H1 (cell line): ENCODE measurements at regions of chr18 and their contacts with region 1.

Region 1: GRCh38 chr18:76259096-76259495 is 235.9 kb downstream of the ZNF516 start:
- DNase-seq: peak in 1 of 2 experiments; percentile 58
- H3K4me3 ChIP-seq: no peak overlapping the region
- H3K27ac ChIP-seq: no peak overlapping the region
- H3K4me1 ChIP-seq: peaks cover 0 to 24% (median 16%) of the 10 kb centered on the region in 4 experiments; a peak in 6 of 7 replicates
- H3K27me3 ChIP-seq: no peaks in the 10 kb centered on the region
- CTCF ChIP-seq: peak in 2 of 3 experiments; percentile 47 to 67; a peak in 3 of 4 replicates
- EP300 ChIP-seq: no peak
- POLR2A ChIP-seq: no peak
- RAD21 ChIP-seq: peak; percentile 22 to 31; a peak in 3 of 4 replicates

Region 2: GRCh38 chr18:75937306-75937705 is 321.8 kb before region 1 on chr18:
- CTCF ChIA-PET with region 1: no interaction called
- POLR2A ChIA-PET with region 1: no interaction called
- DNase-seq: no peak
- H3K4me3 ChIP-seq: peak overlapping the region in 1 of 4 experiments; percentile 23; a peak in 1 of 8 replicates
- H3K27ac ChIP-seq: no peak overlapping the region
- H3K4me1 ChIP-seq: peaks cover 0 to 12% (median 6%) of the 10 kb centered on the region in 4 experiments; a peak in 6 of 7 replicates
- H3K27me3 ChIP-seq: no peaks in the 10 kb centered on the region
- CTCF ChIP-seq: no peak
- EP300 ChIP-seq: no peak
- POLR2A ChIP-seq: no peak
- RAD21 ChIP-seq: no peak

Region 3: DNA sequence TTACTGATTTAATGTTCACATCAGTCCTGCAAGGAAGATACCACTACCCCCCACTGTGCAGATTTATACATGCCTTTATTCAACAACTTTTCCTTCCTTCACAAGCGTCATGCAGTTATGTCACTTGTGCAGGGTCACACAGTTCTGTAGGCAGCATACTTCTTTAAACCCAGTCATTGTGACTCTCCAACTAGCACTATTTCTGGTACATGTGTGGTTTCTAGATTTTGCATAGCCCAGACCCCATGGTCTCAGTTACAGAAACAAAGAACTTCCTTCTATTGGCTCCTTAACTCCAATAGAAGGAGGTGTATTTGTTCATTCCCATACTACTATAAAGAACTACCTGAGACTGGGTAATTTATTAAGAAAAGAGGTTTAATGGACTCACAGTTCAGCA is 97.1 kb before region 1 on chr18:
- CTCF ChIA-PET with region 1: no interaction called
- POLR2A ChIA-PET with region 1: no interaction called
- DNase-seq: no peak
- H3K4me3 ChIP-seq: no peak overlapping the region
- H3K27ac ChIP-seq: no peak overlapping the region
- H3K4me1 ChIP-seq: no peaks in the 10 kb centered on the region
- H3K27me3 ChIP-seq: no peaks in the 10 kb centered on the region; a peak in 2 of 7 replicates
- CTCF ChIP-seq: no peak
- EP300 ChIP-seq: no peak
- POLR2A ChIP-seq: no peak
- RAD21 ChIP-seq: no peak

Region 4: GRCh38 chr18:76349067-76349715 is 90.1 kb after region 1 on chr18:
- CTCF ChIA-PET with region 1: interaction called, 12 read pairs
- POLR2A ChIA-PET with region 1: no interaction called
- DNase-seq: peak; percentile 41 to 86
- H3K4me3 ChIP-seq: no peak overlapping the region; a peak in 2 of 8 replicates
- H3K27ac ChIP-seq: no peak overlapping the region
- H3K4me1 ChIP-seq: peaks cover 3 to 6% (median 4%) of the 10 kb centered on the region in 4 experiments; a peak in 4 of 7 replicates
- H3K27me3 ChIP-seq: no peaks in the 10 kb centered on the region
- CTCF ChIP-seq: peak; percentile 66 to 87 (median 74)
- EP300 ChIP-seq: no peak
- POLR2A ChIP-seq: no peak
- RAD21 ChIP-seq: peak; percentile 93 to 96